Heart right ventricle (tissue), 16 donors: ENCODE measurements at regions of chr7 and their contacts with region 1.

Region 1: DNA sequence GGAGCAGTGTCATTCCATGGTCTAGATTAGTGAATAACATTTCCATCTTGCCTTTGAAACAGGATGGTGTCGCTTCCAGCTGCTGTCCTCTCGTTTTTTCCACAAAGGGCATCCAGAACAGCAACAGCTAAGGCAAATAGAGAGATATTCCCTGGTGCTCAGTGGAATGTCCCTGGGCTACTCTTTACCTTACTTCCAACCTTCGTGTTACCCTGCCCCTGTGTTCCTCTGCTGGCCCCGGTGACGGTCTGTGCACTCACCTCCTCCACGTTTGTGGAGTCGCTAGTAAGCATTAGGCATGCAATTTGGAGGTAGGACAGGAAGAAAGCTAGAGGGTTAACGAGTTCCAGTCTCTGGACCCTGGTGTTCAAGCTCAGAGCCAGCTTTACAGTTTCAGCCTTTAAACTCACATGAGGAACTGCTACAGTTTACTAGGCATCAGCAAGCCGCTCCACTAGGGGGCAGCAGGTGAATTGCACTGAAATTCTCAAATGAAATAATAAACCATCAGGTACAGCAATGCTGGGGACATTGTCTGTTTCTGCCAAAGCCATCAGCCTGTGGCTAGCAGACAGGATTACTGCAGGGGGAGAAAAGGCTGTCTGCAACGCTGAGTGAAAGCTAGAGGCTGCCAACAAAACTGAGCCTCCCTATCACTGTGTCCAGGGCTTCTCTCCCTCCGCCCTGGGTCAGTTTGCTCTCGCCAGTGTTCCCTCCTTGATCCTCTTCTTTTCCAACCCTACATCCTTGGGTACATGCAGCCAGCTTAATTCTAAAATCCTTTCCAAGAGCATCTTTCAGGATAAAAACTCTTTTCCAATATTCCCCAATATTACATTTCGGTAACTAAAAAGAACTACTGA is 9.0 kb downstream of the MRPL32 start:
- DNase-seq: peak; percentile 70 to 75
- ATAC-seq: peak; percentile 23 to 83 (median 66)
- H3K4me3 ChIP-seq: no peak overlapping the region
- H3K27ac ChIP-seq: no peak overlapping the region
- H3K4me1 ChIP-seq: peaks cover 0 to 4% (median 0%) of the 10 kb centered on the region in 9 donors
- H3K27me3 ChIP-seq: no peaks in the 10 kb centered on the region
- CTCF ChIP-seq: peak; percentile 78 to 92 (median 88)

Region 2: DNA sequence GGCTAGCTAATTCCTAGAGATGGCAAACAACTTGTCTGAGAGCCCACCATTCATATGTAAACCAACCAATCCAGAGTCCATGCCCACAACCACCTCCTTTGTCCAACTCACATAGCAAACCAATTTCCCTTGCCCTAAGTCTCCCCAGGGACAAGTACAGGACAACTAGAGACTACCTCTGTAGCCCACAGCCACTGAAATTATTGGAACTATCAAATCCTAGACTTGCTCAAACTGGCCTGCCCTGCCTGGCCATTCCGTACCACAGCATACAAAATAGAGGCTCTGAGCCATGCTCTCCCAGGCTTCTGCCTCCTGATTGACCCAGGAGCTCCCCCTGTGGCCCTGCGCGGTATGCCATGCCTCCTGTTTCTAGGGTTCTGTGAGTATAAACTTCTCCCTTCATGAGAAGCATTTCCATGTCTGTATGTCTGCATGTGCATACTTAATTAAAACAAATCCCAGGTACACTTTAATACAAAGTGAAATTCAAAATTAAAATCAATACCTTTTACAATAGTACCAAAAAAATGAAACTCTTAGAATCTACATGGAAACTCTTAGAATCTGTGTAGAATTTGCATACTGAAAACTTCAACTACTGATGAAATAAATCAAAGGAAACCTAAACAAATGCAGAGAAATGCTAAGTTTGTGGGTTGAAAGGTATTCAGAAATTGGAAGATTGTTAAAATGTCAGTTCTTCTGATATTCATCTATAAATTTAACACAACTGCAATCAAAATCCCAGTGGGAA is 167.2 kb after region 1 on chr7:
- intact Hi-C with region 1: loop called in 6 of 10 experiments (anchors 2 to 10 kb)
- DNase-seq: peak; percentile 29 to 56
- ATAC-seq: peak in 4 of 8 donors; percentile 37 to 75 (median 49)
- H3K4me3 ChIP-seq: no peak overlapping the region
- H3K27ac ChIP-seq: no peak overlapping the region
- H3K4me1 ChIP-seq: peaks cover 0 to 14% (median 11%) of the 10 kb centered on the region in 9 donors
- H3K27me3 ChIP-seq: peaks cover 11 to 63% (median 53%) of the 10 kb centered on the region in 7 donors
- CTCF ChIP-seq: peak; percentile 46 to 84 (median 67)

Region 3: GRCh38 chr7:43444711-43445578 is 503.7 kb after region 1 on chr7:
- intact Hi-C with region 1: loop called in 3 of 10 experiments (anchors 5 to 10 kb)
- DNase-seq: no peak
- ATAC-seq: peak in 1 of 8 donors; percentile 41
- H3K4me3 ChIP-seq: no peak overlapping the region
- H3K27ac ChIP-seq: no peak overlapping the region
- H3K4me1 ChIP-seq: no peaks in the 10 kb centered on the region
- H3K27me3 ChIP-seq: peaks cover 0 to 9% (median 0%) of the 10 kb centered on the region in 7 donors
- CTCF ChIP-seq: no peak

Region 4: DNA sequence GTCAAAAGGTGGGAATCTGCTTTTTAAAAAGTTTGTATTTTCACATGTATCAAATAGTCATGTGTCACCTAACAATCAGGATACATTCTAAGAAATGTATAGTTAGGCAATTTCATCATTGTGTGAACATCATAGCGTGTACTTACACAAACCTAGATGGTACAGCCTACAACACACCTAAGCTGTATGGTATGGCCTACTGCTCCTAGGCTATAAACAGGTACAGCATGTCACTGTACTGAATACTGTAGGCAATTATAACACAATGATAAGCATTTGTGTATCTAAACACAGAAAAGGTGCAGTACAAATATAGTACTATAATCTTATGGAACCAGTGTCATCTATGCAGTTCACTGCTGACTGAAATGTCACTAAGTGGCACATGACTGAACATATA is 770.3 kb after region 1 on chr7:
- intact Hi-C with region 1: loop called in 2 of 10 experiments (anchors 10 kb)
- DNase-seq: no peak
- ATAC-seq: no peak
- H3K4me3 ChIP-seq: no peak overlapping the region
- H3K27ac ChIP-seq: no peak overlapping the region
- H3K4me1 ChIP-seq: peaks cover 0 to 17% (median 8%) of the 10 kb centered on the region in 9 donors
- H3K27me3 ChIP-seq: no peaks in the 10 kb centered on the region
- CTCF ChIP-seq: no peak

Region 5: DNA sequence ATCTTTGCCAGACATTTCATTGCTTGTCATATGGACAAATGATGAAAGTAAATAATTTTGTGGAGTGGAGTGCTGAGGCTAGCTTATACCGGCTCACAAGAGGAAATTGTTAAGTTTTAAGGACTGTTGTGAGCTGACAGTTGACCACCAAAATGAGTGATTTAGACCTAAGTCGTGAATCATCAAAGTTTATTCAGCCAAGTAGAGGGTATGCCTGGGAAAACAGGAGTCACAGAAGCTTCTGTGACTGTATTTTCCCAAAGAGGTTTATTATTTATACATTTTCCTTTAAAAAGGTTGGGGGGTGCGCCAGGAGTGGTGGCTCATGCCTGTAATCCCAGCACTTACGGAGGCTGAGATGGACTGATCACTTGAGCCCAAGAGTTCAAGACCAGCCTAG is 906.3 kb after region 1 on chr7:
- intact Hi-C with region 1: loop called in 1 of 10 experiments (anchors 5 kb)
- DNase-seq: no peak
- ATAC-seq: no peak
- H3K4me3 ChIP-seq: no peak overlapping the region
- H3K27ac ChIP-seq: no peak overlapping the region
- H3K4me1 ChIP-seq: no peaks in the 10 kb centered on the region
- H3K27me3 ChIP-seq: peaks cover 0 to 20% (median 0%) of the 10 kb centered on the region in 7 donors
- CTCF ChIP-seq: no peak